Sigmoid colon (tissue), 7 donors: ENCODE measurements at regions of chr9 and their contacts with region 1.

Region 1: DNA sequence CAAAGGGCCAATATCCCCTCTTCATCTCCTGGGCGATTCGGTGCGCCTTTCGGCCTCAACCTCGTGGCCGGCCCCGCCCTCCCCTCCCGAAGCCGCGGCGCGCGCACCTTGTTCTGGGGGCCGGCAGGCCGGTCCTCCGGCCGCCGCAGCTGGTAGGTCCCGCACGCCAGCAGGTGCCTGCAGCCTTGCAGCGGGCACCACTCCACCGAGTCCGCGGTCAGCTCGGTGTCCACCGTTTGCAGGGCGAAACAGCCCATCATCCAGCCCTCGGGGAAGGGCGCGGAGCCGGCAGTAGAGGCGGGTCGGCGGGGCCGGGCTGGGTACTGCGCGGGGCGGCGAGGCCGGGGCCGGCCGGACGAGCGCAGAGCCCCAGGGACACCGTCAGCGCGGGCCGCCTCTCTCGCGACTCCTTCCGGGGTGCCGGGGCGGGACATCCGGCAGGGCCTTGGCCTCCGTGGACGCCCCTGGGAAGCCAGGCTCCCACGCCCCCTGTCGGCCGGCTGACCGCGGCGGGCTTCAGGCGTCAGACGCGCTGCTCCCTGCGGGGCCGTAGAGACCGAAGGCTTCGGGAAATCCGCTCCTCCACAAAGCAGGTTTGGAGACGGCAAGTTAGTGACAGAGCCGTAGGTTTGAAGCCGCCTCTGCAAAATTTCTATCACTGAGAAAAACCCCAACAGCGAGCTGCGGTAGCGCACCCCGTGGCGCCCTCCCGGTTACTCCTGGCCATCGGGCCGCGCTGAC is at the start of gene DPH7:
- DNase-seq: peak; percentile 96
- H3K4me3 ChIP-seq: peak within 1 kb of the TSS; percentile 78 to 98 (median 87)
- H3K27ac ChIP-seq: peak within 1 kb of the TSS; percentile 87 to 89 (median 88)
- H3K4me1 ChIP-seq: peaks cover 0 to 50% (median 35%) of the 10 kb centered on the region in 4 donors
- H3K27me3 ChIP-seq: no peaks in the 10 kb centered on the region
- CTCF ChIP-seq: peak; percentile 75 to 91 (median 81)
- EP300 ChIP-seq: no peak
- POLR2A ChIP-seq: peak in 1 of 2 donors; percentile 22
- total RNA-seq, gene DPH7: 28.5 to 43.6 (median 29.0) TPM

Region 2: DNA sequence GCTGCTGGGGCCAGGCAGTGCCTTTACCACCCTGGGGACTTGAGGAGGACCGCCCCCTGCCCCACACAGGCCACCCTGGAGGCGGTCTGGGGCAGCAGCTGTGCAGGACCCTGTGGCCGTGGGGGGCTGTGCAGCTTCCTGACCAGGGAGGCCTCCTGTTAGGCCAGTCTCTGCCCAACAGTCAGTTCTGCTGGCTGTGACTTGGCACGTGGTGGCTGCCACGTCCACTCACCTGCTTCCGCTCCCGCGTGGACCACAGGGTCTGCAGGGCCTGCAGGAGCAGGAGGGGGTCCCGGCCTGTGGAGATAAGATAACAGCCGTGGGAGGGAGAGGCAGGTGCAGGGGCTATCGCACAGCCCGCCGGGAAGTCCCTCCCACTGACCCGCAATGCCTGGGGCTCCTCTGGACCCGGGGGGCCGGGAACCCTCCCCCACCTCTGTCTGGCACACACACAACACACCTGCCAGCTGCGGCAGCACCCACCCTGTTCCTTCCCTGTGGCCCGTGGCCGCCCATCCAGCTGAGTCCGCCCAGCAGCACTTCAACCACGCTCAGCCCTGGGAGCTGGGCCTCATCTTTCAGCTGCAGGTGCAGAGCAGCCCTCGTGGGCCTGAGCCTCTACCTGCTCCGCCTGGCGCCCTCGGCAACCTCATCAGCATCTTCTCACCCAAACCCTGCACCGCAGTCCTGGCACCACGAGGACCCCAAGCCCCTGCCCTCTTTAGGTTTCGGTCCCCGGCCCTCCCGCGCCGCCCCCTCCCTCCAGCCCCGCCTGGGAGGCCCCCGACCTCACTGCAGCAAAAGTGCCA is 195.4 kb before region 1 on chr9:
- intact Hi-C with region 1: no loop called
- DNase-seq: peak; percentile 51
- H3K4me3 ChIP-seq: no peak overlapping the region
- H3K27ac ChIP-seq: no peak overlapping the region
- H3K4me1 ChIP-seq: no peaks in the 10 kb centered on the region
- H3K27me3 ChIP-seq: no peaks in the 10 kb centered on the region
- CTCF ChIP-seq: no peak
- EP300 ChIP-seq: no peak
- POLR2A ChIP-seq: no peak

Region 3: GRCh38 chr9:137551651-137552384 is 26.9 kb before region 1 on chr9 and contains the start of gene MRPL41:
- intact Hi-C with region 1: loop called (anchors 1 kb)
- DNase-seq: peak; percentile 95
- H3K4me3 ChIP-seq: peak within 1 kb of the TSS; percentile 56 to 95 (median 86)
- H3K27ac ChIP-seq: peak within 1 kb of the TSS; percentile 86 to 94 (median 92)
- H3K4me1 ChIP-seq: peaks cover 0 to 42% (median 33%) of the 10 kb centered on the region in 4 donors
- H3K27me3 ChIP-seq: no peaks in the 10 kb centered on the region
- CTCF ChIP-seq: no peak
- EP300 ChIP-seq: no peak
- POLR2A ChIP-seq: peak; percentile 65 to 70
- total RNA-seq, gene MRPL41: 38.5 to 73.1 (median 57.9) TPM

Region 4: GRCh38 chr9:137618105-137619067 is 39.7 kb after region 1 on chr9 and contains the start of gene EHMT1:
- intact Hi-C with region 1: loop called (anchors 5 kb)
- DNase-seq: peak; percentile 90
- H3K4me3 ChIP-seq: peak within 1 kb of the TSS; percentile 83 to 94 (median 86)
- H3K27ac ChIP-seq: peak within 1 kb of the TSS; percentile 91 to 95 (median 92)
- H3K4me1 ChIP-seq: peaks cover 0 to 48% (median 44%) of the 10 kb centered on the region in 4 donors
- H3K27me3 ChIP-seq: no peaks in the 10 kb centered on the region
- CTCF ChIP-seq: no peak
- EP300 ChIP-seq: no peak
- POLR2A ChIP-seq: peak in 1 of 2 donors; percentile 50
- total RNA-seq, gene EHMT1: 60.4 to 91.4 (median 70.7) TPM

Region 5: DNA sequence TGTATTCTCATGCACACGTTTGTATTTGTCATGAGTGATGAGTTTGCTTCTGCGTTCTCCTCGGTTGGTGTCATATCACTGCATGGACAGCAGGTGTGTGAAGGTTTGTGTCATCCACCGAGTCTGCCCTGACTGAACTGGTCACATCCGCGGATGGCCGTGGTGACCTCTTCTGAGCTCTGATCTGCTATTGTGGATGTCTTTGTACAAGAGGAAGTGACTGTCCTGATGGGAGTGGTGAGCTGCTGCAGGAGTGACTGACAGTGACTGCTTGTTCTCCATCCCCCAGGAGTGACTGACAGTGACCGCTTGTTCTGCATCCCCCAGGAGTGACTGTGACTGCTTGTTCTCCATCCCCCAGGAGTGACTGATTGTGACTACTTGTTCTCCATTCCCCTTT is 110.0 kb after region 1 on chr9:
- intact Hi-C with region 1: no loop called
- DNase-seq: no peak
- H3K4me3 ChIP-seq: no peak overlapping the region
- H3K27ac ChIP-seq: no peak overlapping the region
- H3K4me1 ChIP-seq: peaks cover 0 to 50% (median 42%) of the 10 kb centered on the region in 4 donors
- H3K27me3 ChIP-seq: no peaks in the 10 kb centered on the region
- CTCF ChIP-seq: no peak
- EP300 ChIP-seq: no peak
- POLR2A ChIP-seq: no peak

Region 6: GRCh38 chr9:138053321-138053868 is 474.7 kb after region 1 on chr9:
- intact Hi-C with region 1: no loop called
- DNase-seq: no peak
- H3K4me3 ChIP-seq: no peak overlapping the region
- H3K27ac ChIP-seq: no peak overlapping the region
- H3K4me1 ChIP-seq: no peaks in the 10 kb centered on the region
- H3K27me3 ChIP-seq: peaks cover 0 to 12% (median 0%) of the 10 kb centered on the region in 3 donors
- CTCF ChIP-seq: no peak
- EP300 ChIP-seq: no peak
- POLR2A ChIP-seq: no peak